ENCODE measurements at regions of chr17 and their contacts with region 1.

Region 1: DNA sequence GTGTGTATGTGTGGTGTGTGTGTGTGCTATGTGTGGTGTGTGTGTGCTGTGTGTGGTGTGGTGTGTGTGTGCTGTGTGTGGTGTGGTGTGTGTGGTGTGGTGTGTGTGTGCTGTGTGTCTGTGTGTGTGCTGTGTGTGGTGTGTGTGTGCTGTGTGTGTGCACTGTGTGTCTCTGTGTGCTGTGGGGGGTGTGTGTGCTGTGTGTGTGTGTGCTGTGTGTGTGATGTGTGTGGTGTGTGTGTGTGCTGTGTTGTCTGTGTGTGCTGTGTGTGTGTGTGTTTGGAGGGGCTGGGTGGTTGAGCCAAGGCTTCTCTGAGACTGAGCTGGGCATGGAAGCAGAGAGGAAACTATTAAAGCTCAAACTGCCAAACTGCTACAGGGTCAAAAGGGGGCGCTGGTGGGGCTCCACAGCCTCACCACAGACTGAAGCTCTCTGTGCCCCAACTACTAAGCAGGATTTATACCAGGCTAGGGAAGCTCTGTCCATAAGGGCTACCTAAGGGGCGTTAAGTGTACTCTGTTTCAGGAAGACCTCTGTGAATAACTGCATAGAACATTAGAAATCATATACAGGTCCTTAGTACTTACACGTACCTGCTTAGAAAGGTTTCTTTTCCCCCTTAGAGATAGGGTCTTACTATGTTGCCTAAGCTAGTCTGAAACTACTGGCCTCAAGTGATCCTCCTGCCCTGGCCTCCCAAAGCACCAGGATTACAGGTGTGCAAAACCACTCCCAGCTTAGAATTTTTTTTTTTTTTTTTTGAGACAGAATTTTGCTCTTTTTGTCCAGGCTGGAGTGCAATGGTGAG is 27.8 kb upstream of the GHDC start:
- DNase-seq: peak; percentile 61
- ATAC-seq: peak; percentile 93
- H3K4me3 Mint-ChIP-seq: no peak overlapping the region
- H3K27ac Mint-ChIP-seq: no peak overlapping the region
- H3K4me1 Mint-ChIP-seq: no peaks in the 10 kb centered on the region
- H3K27me3 Mint-ChIP-seq: no peaks in the 10 kb centered on the region
- CTCF ChIP-seq: peak; percentile 59; the same call in 1 of the 2 replicates

Region 2: GRCh38 chr17:42163113-42163512 is 59.0 kb before region 1 on chr17:
- CTCF ChIA-PET with region 1: interaction called, 17 read pairs
- POLR2A ChIA-PET with region 1: no interaction called
- DNase-seq: peak; percentile 87
- ATAC-seq: peak; percentile 86
- H3K4me3 Mint-ChIP-seq: no peak overlapping the region
- H3K27ac Mint-ChIP-seq: 0 out of 2 replicates have a peak overlapping the region, but pooled peaks have one; percentile 54
- H3K4me1 Mint-ChIP-seq: 0 out of 2 replicates have a peak, but pooled peaks cover 3% of the 10 kb centered on the region
- H3K27me3 Mint-ChIP-seq: no peaks in the 10 kb centered on the region; the same call in 1 of the 2 replicates
- CTCF ChIP-seq: peak; percentile 81

Region 3: DNA sequence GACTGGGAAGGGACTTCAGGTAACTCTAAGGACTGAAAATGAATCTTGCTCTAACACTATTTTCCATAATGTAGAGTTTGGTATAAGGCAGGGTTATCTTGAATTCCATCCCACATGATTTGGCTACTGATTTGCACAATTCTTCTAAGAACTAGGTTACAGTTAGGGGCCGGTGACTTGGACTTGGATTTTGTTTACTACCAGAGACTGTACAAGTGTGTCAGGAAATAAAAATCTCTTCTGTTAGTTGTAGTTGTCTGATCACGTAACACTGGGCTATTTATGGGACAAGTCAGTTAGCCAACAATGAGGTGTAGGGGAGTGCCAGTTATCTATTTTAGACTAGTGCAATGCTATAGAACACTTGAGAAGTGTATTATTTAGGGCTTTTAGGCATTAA is 11.8 kb after region 1 on chr17:
- CTCF ChIA-PET with region 1: interaction called, 16 read pairs
- POLR2A ChIA-PET with region 1: no interaction called
- DNase-seq: no peak
- ATAC-seq: no peak
- H3K4me3 Mint-ChIP-seq: no peak overlapping the region
- H3K27ac Mint-ChIP-seq: no peak overlapping the region
- H3K4me1 Mint-ChIP-seq: no peaks in the 10 kb centered on the region
- H3K27me3 Mint-ChIP-seq: no peaks in the 10 kb centered on the region
- CTCF ChIP-seq: no peak

Region 4: DNA sequence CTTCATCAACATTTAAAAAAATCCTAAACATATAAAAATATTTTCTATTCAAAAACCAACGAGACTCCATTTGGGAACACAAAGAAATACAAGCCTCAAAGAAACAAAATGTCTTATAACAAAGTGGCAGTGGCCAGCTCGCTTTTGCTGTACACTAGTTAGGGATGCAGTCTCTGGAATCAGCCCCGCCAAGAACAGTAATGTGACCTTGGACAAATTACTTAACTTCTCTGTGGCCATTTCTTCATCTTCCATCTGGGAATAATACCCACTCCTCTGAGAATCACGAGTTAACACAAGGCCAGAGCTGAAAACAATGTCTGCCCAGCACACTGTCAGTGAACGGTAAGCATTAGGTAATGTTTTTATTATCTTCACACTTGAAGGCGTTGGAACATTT is 48.5 kb after region 1 on chr17:
- CTCF ChIA-PET with region 1: interaction called, 21 read pairs
- POLR2A ChIA-PET with region 1: interaction called, 3 read pairs
- DNase-seq: no peak
- ATAC-seq: no peak
- H3K4me3 Mint-ChIP-seq: no peak overlapping the region
- H3K27ac Mint-ChIP-seq: no peak overlapping the region
- H3K4me1 Mint-ChIP-seq: peaks cover 50% of the 10 kb centered on the region
- H3K27me3 Mint-ChIP-seq: no peaks in the 10 kb centered on the region
- CTCF ChIP-seq: no peak

Region 5: GRCh38 chr17:42322382-42323267 is 100.5 kb after region 1 on chr17:
- CTCF ChIA-PET with region 1: interaction called, 18 read pairs
- POLR2A ChIA-PET with region 1: no interaction called
- DNase-seq: peak; percentile 98
- ATAC-seq: peak; percentile 97
- H3K4me3 Mint-ChIP-seq: no peak overlapping the region
- H3K27ac Mint-ChIP-seq: peak overlapping the region; percentile 34
- H3K4me1 Mint-ChIP-seq: peaks cover 16% of the 10 kb centered on the region
- H3K27me3 Mint-ChIP-seq: no peaks in the 10 kb centered on the region; the same call in 1 of the 2 replicates
- CTCF ChIP-seq: peak; percentile 97

Region 6: GRCh38 chr17:42517516-42517915 is 295.4 kb after region 1 on chr17:
- CTCF ChIA-PET with region 1: interaction called, 15 read pairs
- POLR2A ChIA-PET with region 1: no interaction called
- DNase-seq: peak; percentile 91
- ATAC-seq: peak; percentile 83
- H3K4me3 Mint-ChIP-seq: no peak overlapping the region
- H3K27ac Mint-ChIP-seq: no peak overlapping the region
- H3K4me1 Mint-ChIP-seq: peaks cover 19% of the 10 kb centered on the region
- H3K27me3 Mint-ChIP-seq: peaks cover 4% of the 10 kb centered on the region
- CTCF ChIP-seq: peak; percentile 88